ENCODE measurements at regions of chr17 and their contacts with region 1.

Region 1: GRCh38 chr17:17812211-17813057 is 24.4 kb downstream of the SREBF1 start:
- DNase-seq: peak in 1 of 2 donors; percentile 85
- H3K4me3 ChIP-seq: no peak overlapping the region
- H3K27ac ChIP-seq: no peak overlapping the region
- H3K4me1 ChIP-seq: peaks cover 0 to 2% of the 10 kb centered on the region in 2 donors
- H3K27me3 ChIP-seq: no peaks in the 10 kb centered on the region
- CTCF ChIP-seq: peak; percentile 97 to 100 (median 100)

Region 2: DNA sequence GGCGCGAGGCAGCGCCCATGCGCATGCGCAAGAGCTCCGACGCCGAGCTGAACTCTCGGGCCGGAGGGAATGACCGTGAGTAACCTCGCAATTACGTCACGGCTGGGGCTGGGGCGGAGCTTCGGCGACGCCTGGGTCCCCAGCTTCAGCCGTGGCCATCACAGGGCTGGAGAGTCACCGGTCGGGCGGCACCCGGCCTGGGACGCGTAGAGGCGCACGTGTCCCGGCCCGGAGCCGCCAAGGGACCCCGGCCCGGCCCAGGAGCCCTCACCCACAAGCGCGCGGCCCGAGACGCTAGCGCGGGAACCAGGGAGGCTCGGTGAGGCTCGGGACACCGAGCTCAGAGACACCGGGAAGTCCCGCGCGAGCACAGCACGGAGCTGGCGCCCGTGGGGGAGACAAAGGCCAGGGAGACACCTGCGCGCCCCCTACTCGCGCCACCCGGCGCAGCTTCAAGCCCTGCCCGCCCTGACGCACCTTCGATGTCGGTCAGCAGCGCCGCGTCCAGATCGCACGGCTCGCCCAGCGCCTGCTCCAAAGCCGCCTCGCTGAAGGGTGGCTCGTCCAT is 23.9 kb after region 1 on chr17:
- intact Hi-C with region 1: no loop called
- DNase-seq: peak; percentile 90 to 98
- H3K4me3 ChIP-seq: peak overlapping the region; percentile 62 to 73
- H3K27ac ChIP-seq: peak overlapping the region; percentile 93 to 98
- H3K4me1 ChIP-seq: peaks cover 19 to 52% of the 10 kb centered on the region in 2 donors
- H3K27me3 ChIP-seq: no peaks in the 10 kb centered on the region
- CTCF ChIP-seq: no peak

Region 3: DNA sequence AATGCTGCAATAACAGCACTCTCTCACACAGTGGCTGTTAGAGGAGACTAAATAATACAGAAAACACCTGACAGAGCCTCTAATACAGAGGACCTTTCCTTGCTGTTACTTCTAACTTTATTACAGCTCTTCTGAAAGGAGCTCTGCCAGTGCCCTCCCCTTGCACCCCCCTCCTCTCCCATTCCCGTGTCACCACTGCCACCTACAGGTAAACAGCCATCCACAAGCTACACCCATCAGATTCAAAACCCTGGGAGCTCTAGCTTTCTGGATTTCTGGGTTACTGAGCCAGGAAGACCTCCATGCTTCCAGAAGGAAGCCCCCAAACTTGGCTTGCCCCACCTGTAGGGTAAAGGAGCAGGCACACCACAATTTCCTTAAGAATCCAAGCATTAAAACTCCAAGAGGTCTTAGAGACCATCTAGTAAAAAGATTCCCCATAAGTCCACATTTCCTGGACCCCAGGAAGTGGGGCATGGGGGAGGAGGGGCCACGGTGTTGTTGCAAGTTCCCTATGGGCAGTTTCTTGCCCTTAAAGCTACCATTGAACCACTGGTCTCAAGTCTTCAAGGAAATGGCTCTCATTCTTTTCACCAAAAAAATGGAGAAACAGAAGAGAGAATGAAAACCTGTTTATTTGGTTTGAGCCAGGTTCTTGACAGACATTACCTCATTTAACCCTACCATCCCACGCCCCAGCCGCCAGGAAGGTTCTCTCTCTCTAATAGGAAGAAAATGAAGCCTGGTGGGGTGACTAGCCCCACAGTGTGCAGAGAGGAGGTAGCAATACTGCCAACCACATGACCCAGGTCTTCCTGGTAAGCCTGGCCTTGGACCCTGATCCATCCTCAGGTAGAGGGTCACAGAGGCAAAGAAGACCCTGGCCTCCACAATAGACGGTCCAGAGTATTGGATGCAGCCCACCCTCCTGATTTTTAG is 107.0 kb after region 1 on chr17:
- intact Hi-C with region 1: loop called (anchors 2 kb)
- DNase-seq: peak in 1 of 2 donors; percentile 83
- H3K4me3 ChIP-seq: no peak overlapping the region
- H3K27ac ChIP-seq: no peak overlapping the region
- H3K4me1 ChIP-seq: peaks cover 3 to 16% of the 10 kb centered on the region in 2 donors
- H3K27me3 ChIP-seq: no peaks in the 10 kb centered on the region
- CTCF ChIP-seq: peak; percentile 68 to 81 (median 69)

Region 4: GRCh38 chr17:18033442-18034099 is 221.1 kb after region 1 on chr17:
- intact Hi-C with region 1: loop called (anchors 2 kb)
- DNase-seq: peak in 1 of 2 donors; percentile 70
- H3K4me3 ChIP-seq: no peak overlapping the region
- H3K27ac ChIP-seq: no peak overlapping the region
- H3K4me1 ChIP-seq: peaks cover 3 to 9% of the 10 kb centered on the region in 2 donors
- H3K27me3 ChIP-seq: no peaks in the 10 kb centered on the region
- CTCF ChIP-seq: peak; percentile 43 to 67 (median 66)

Measured in ascending aorta (tissue), 2 donors.